ENCODE measurements at regions of chr19 and their contacts with region 1.

Region 1: GRCh38 chr19:6393074-6393983 is at the start of gene GTF2F1:
- DNase-seq: peak; percentile 76 to 97
- H3K4me3 ChIP-seq: peak within 1 kb of the TSS; percentile 74 to 75
- H3K27ac ChIP-seq: peak within 1 kb of the TSS; percentile 94
- H3K4me1 ChIP-seq: peaks cover 9 to 14% of the 10 kb centered on the region in 2 donors
- H3K27me3 ChIP-seq: no peaks in the 10 kb centered on the region
- CTCF ChIP-seq: peak in 1 of 3 experiments; percentile 25
- total RNA-seq, gene GTF2F1: 67.9 TPM

Region 2: GRCh38 chr19:6333440-6333839 is 59.9 kb before region 1 on chr19 and contains the start of gene ACER1:
- intact Hi-C with region 1: no loop called
- DNase-seq: no peak
- H3K4me3 ChIP-seq: no peak within 1 kb of the TSS
- H3K27ac ChIP-seq: no peak within 1 kb of the TSS
- H3K4me1 ChIP-seq: no peaks in the 10 kb centered on the region
- H3K27me3 ChIP-seq: no peaks in the 10 kb centered on the region
- CTCF ChIP-seq: no peak
- total RNA-seq, gene ACER1: not detected

Region 3: DNA sequence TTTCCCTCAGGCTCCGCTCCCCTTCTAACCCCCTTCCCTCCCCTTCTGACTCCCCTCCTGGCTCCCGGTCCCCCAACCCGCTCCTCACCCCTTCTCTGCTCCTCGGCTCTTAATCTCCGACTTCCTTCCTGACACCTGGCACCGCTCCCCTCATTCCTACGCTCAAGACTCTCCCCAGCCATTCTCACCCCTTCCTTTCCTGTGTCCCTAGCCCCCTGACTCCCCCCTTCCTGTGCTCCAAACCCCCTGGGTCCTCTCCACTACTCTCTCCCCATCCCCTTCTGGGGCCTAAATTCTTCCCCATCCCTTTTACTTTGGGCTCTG is 31.3 kb before region 1 on chr19:
- intact Hi-C with region 1: loop called (anchors 1 kb)
- DNase-seq: no peak
- H3K4me3 ChIP-seq: peak overlapping the region; percentile 68 to 99
- H3K27ac ChIP-seq: peak overlapping the region; percentile 80 to 91
- H3K4me1 ChIP-seq: peaks cover 4 to 7% of the 10 kb centered on the region in 2 donors
- H3K27me3 ChIP-seq: no peaks in the 10 kb centered on the region
- CTCF ChIP-seq: no peak

Region 4: GRCh38 chr19:6424939-6425731 is 31.8 kb after region 1 on chr19:
- intact Hi-C with region 1: loop called (anchors 1 kb)
- DNase-seq: peak; percentile 100
- H3K4me3 ChIP-seq: peak overlapping the region; percentile 21 to 48
- H3K27ac ChIP-seq: peak overlapping the region; percentile 83 to 87
- H3K4me1 ChIP-seq: peaks cover 13 to 21% of the 10 kb centered on the region in 2 donors
- H3K27me3 ChIP-seq: no peaks in the 10 kb centered on the region
- CTCF ChIP-seq: peak in 1 of 3 experiments; percentile 17

Region 5: DNA sequence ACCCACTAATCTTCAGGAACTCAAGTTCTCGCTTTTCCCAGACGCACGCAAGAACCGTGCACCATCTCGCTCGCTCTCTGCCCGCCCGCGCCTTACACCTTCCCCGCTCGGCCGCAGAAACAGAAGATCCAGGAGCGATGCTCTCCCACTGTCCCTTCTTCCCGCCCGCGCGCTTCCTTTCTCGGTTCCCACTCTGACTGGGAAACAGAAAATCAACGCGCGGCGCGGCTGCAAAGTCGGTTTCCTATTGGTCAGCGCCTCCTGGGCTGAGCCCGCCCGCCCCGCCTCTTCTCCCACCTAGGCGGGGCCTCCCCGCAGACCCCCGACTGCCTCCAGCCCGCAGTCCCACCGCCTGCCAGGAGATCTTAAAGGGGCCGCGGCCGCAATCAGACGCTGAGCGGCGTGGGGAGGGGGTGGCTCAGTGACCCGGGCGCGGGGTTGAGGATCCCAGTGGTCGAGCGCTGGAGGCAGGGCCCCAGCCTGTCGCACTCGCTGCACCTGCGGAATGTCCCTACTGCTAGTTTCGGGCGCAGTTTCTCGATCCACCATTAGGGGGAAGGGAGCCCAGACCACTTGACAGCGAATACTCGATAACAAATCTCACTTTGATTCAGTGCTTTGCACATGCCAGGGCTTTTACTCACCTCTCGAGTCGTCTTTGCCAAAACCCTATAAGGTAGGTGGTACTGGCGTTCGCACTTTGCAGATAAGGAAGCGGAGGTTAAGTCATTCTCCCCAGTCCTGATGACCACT is 66.9 kb after region 1 on chr19:
- intact Hi-C with region 1: loop called (anchors 2 kb)
- DNase-seq: peak; percentile 84 to 98
- H3K4me3 ChIP-seq: peak overlapping the region; percentile 72 to 79
- H3K27ac ChIP-seq: peak overlapping the region in 1 of 2 donors; percentile 59
- H3K4me1 ChIP-seq: peaks cover 0 to 4% of the 10 kb centered on the region in 2 donors
- H3K27me3 ChIP-seq: no peaks in the 10 kb centered on the region
- CTCF ChIP-seq: peak; percentile 59 to 73 (median 63)

Measured in ascending aorta (tissue), 2 donors.